ENCODE measurements at regions of chr1 and their contacts with region 1.

Region 1: GRCh38 chr1:184805667-184806295 is 51.1 kb upstream of the EDEM3 start:
- DNase-seq: peak; percentile 92
- ATAC-seq: peak; percentile 96

Region 2: GRCh38 chr1:184892116-184892515 is 86.3 kb after region 1 on chr1:
- intact Hi-C with region 1: no loop called
- DNase-seq: no peak
- ATAC-seq: no peak

Region 3: GRCh38 chr1:184982002-184982954 is 176.5 kb after region 1 on chr1:
- intact Hi-C with region 1: loop called (anchors 2 kb)
- DNase-seq: peak; percentile 86
- ATAC-seq: peak; percentile 98

Measured in left ventricle myocardium superior (tissue), 1 donor.